K562 (cell line): ENCODE measurements at regions of chr11 and their contacts with region 1.

Region 1: GRCh38 chr11:38791302-38791961 is 2193.4 kb upstream of the RAG2 start:
- DNase-seq: peak; percentile 43 to 77 (median 52)
- ATAC-seq: peak; percentile 82
- H3K4me3 ChIP-seq: no peak overlapping the region
- H3K27ac ChIP-seq: no peak overlapping the region
- H3K4me1 ChIP-seq: no peaks in the 10 kb centered on the region
- H3K27me3 ChIP-seq: no peaks in the 10 kb centered on the region
- CTCF ChIP-seq: peak; percentile 50 to 77 (median 67); a peak in 5 of 6 replicates
- EP300 ChIP-seq: no peak
- POLR2A ChIP-seq: no peak
- RAD21 ChIP-seq: peak; percentile 89 to 91

Region 2: DNA sequence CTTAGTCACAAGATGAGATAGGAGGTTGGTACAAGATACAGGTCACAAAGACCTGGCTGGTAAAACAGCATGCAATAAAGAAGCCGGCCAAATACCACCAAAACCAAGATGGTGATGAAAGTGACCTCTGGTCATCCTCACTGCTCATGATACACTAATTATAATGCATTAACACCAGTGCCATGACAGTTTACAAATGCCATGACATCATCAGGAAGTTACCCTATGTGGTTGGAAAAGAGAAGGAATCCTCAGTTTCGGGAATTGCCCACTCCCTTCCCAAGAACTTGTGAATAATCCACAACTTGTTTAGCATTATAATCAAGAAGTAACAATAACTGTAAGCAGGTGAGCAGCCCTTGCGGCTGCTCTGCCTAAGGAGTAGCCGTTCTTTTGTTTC is 1784.9 kb before region 1 on chr11:
- CTCF ChIA-PET with region 1: interaction called, 3 read pairs
- POLR2A ChIA-PET with region 1: no interaction called
- in situ Hi-C with region 1: no loop called
- intact Hi-C with region 1: loop called (anchors 5 kb)
- DNase-seq: no peak
- ATAC-seq: no peak
- H3K4me3 ChIP-seq: no peak overlapping the region
- H3K27ac ChIP-seq: no peak overlapping the region
- H3K4me1 ChIP-seq: no peaks in the 10 kb centered on the region
- H3K27me3 ChIP-seq: no peaks in the 10 kb centered on the region
- CTCF ChIP-seq: no peak
- EP300 ChIP-seq: no peak
- POLR2A ChIP-seq: no peak
- RAD21 ChIP-seq: no peak

Region 3: DNA sequence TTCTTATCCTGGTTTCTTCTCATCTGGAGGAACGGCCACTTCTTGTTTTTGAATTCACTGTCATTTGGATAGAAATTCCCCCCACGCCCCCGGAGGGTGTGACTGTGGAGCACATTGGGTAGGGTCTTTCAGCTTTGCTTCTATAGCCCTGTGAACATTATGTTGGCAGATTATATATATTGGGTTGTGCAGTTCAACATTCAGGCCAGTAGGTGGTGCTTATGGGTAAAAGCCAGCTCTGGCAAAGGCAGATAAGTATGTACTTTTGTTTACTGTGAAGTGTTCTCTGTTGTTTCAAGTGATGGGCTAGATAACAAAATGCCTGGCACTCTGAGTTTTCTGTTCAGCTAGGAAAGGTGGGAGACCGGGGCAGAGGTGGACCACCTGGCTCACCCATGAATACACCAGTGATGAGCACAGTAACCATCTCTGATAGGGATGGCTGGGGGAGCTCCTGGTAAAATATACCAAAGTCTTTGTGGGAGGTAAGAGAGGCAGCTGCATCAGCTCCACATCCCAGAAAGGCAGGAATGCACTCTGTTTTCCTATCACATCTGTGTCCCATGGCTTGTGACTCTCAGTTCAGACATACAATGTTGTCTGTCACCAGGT is 845.2 kb before region 1 on chr11:
- CTCF ChIA-PET with region 1: no interaction called
- POLR2A ChIA-PET with region 1: no interaction called
- in situ Hi-C with region 1: no loop called
- intact Hi-C with region 1: loop called (anchors 1 kb)
- DNase-seq: peak in 3 of 4 experiments; percentile 7 to 46 (median 13)
- ATAC-seq: peak; percentile 67
- H3K4me3 ChIP-seq: no peak overlapping the region
- H3K27ac ChIP-seq: no peak overlapping the region
- H3K4me1 ChIP-seq: no peaks in the 10 kb centered on the region
- H3K27me3 ChIP-seq: no peaks in the 10 kb centered on the region
- CTCF ChIP-seq: peak; percentile 29 to 68 (median 58); a peak in 5 of 6 replicates
- EP300 ChIP-seq: no peak
- POLR2A ChIP-seq: no peak
- RAD21 ChIP-seq: peak; percentile 41 to 59; a peak in 2 of 4 replicates

Region 4: DNA sequence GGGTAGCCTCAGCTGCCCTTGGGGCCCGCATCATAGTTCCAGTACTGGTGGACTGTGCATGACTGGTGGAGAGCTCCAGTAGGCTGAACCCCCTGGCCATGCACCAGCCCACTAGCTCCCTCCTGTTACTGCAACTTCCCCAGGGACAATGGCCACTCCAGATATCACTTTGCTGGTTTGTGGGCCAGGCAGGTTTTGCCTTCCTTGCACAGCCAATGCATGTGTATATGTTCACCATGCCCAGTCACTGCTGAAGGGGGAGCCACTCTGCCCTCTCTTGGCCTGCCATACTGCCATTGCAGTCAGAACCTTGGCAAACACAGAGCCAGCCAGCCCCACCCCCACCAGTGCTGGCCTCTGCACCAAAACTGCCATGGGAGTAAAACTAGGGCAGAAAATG is 98.1 kb before region 1 on chr11:
- CTCF ChIA-PET with region 1: no interaction called
- POLR2A ChIA-PET with region 1: no interaction called
- in situ Hi-C with region 1: no loop called
- intact Hi-C with region 1: no loop called
- DNase-seq: no peak
- ATAC-seq: no peak
- H3K4me3 ChIP-seq: no peak overlapping the region
- H3K27ac ChIP-seq: no peak overlapping the region
- H3K4me1 ChIP-seq: no peaks in the 10 kb centered on the region
- H3K27me3 ChIP-seq: no peaks in the 10 kb centered on the region
- CTCF ChIP-seq: no peak
- EP300 ChIP-seq: no peak
- POLR2A ChIP-seq: no peak
- RAD21 ChIP-seq: no peak

Region 5: GRCh38 chr11:38824573-38824972 is 33.1 kb after region 1 on chr11:
- CTCF ChIA-PET with region 1: no interaction called
- POLR2A ChIA-PET with region 1: no interaction called
- in situ Hi-C with region 1: no loop called
- intact Hi-C with region 1: no loop called
- DNase-seq: peak in 1 of 4 experiments; percentile 3
- ATAC-seq: no peak
- H3K4me3 ChIP-seq: no peak overlapping the region
- H3K27ac ChIP-seq: no peak overlapping the region
- H3K4me1 ChIP-seq: no peaks in the 10 kb centered on the region
- H3K27me3 ChIP-seq: no peaks in the 10 kb centered on the region
- CTCF ChIP-seq: peak in 1 of 3 experiments; percentile 30; a peak in 3 of 6 replicates
- EP300 ChIP-seq: no peak
- POLR2A ChIP-seq: no peak
- RAD21 ChIP-seq: peak in 1 of 2 experiments; percentile 21; a peak in 1 of 4 replicates

Region 6: GRCh38 chr11:38990161-38990560 is 198.7 kb after region 1 on chr11:
- CTCF ChIA-PET with region 1: no interaction called
- POLR2A ChIA-PET with region 1: no interaction called
- in situ Hi-C with region 1: no loop called
- intact Hi-C with region 1: no loop called
- DNase-seq: no peak
- ATAC-seq: no peak
- H3K4me3 ChIP-seq: no peak overlapping the region
- H3K27ac ChIP-seq: no peak overlapping the region
- H3K4me1 ChIP-seq: no peaks in the 10 kb centered on the region
- H3K27me3 ChIP-seq: no peaks in the 10 kb centered on the region
- CTCF ChIP-seq: no peak
- EP300 ChIP-seq: no peak
- POLR2A ChIP-seq: no peak
- RAD21 ChIP-seq: no peak